ENCODE measurements at regions of chr11 and their contacts with region 1.

Region 1: DNA sequence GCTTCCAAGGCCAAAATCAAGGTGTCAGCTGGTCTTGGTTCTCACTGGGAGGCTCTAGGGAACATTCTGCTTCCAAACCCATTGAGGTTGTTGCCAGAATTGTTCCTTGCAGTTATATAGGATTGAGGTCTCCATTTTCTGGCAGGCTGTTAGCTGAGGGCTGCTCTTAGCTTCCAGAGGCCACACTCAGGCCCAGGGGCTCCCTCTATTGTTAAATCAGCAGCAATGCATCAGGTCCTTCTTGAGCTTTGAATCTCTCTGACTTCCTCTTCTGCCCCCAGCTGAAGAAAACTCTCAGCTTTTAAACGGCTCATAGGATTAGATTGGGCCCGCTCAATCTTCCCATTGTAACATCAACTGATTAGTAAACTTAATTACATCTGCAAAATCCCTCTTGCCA is 39.3 kb upstream of the BSX start:
- DNase-seq: peak; percentile 54 to 77
- ATAC-seq: peak; percentile 84 to 91; a peak in 5 of 6 replicates
- H3K4me3 ChIP-seq: no peak overlapping the region
- H3K27ac ChIP-seq: no peak overlapping the region
- H3K4me1 ChIP-seq: no peaks in the 10 kb centered on the region
- CTCF ChIP-seq: peak; percentile 53
- EP300 ChIP-seq: no peak
- POLR2A ChIP-seq: no peak
- RAD21 ChIP-seq: peak; percentile 52 to 65

Region 2: DNA sequence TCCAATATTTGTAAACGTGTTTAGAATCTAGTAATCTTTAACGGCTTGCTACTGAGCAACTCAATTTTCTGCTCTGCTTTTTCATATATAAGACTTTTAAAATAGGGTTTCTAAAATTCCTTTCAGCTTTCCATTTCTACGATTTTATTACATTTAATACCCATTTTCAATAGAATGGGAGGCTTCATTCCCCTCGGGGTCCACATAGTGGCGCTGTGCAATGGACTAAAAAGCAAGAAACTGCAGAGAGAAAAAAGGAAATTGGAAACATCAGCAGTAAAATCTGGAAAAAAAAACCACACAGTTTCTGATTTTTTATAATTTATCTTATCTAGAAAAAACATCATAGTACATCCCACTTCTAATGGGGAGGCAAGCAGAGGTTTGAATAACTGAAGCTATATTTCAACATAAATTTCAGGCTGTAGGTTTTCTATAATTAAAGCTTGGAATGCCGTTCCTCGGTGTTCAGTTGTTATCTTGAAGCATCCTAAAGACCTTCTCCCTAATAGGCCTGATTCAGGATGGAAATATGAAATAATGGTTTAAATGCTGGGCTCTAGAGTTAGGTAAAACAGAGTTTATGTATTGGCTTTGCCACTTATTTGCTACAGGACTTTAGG is 157.2 kb before region 1 on chr11:
- CTCF ChIA-PET with region 1: interaction called, 177 read pairs
- POLR2A ChIA-PET with region 1: interaction called, 6 read pairs
- DNase-seq: peak; percentile 20 to 37
- ATAC-seq: peak in 1 of 2 experiments; percentile 46; a peak in 1 of 6 replicates
- H3K4me3 ChIP-seq: no peak overlapping the region
- H3K27ac ChIP-seq: no peak overlapping the region
- H3K4me1 ChIP-seq: no peaks in the 10 kb centered on the region
- CTCF ChIP-seq: peak; percentile 83
- EP300 ChIP-seq: no peak
- POLR2A ChIP-seq: no peak
- RAD21 ChIP-seq: peak; percentile 78 to 84

Region 3: DNA sequence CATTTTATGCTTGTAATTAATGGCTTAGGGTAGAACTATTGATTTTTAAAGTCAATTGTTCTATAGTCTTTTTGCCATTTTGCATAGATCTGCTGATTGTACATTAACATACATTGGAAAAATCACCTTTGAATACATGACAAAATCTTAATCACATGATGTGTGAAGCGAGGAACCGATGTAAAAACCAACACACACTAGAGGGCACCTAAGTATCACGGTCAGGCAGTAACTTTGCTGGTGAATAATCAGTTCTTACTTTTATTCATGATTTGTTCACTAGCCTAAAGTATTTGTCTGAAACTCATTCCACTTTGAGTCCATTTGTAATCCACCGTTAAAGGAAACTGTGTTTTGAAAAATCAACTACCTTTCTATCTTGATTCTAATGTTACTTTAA is 110.2 kb before region 1 on chr11:
- CTCF ChIA-PET with region 1: interaction called, 10 read pairs
- POLR2A ChIA-PET with region 1: no interaction called
- DNase-seq: peak in 1 of 2 experiments; percentile 29
- ATAC-seq: peak in 1 of 2 experiments; percentile 32; a peak in 1 of 6 replicates
- H3K4me3 ChIP-seq: no peak overlapping the region
- H3K27ac ChIP-seq: no peak overlapping the region
- H3K4me1 ChIP-seq: no peaks in the 10 kb centered on the region
- CTCF ChIP-seq: peak; percentile 36
- EP300 ChIP-seq: no peak
- POLR2A ChIP-seq: no peak
- RAD21 ChIP-seq: peak; percentile 40 to 59

Region 4: DNA sequence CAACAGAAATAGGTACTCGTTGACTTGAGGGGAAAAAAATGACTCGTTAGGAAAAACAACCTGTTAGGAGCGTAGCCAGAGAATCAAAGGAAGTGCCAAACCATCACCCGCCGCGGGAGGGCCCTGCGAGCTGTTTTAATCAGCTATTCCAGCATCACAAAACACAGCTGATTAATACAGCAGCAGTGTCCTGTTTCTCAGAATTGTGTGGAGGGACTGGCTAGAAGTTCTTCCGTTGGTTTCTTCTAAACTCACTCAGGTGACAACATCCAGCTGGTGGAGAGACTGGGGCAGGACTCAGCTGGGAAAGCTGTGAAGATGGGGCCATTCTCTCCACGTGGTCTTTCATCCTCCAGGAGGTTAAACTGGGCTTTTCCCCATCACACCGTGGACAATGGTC is 12.9 kb after region 1 on chr11:
- CTCF ChIA-PET with region 1: interaction called, 27 read pairs
- POLR2A ChIA-PET with region 1: no interaction called
- DNase-seq: peak in 1 of 2 experiments; percentile 27
- ATAC-seq: peak; percentile 71 to 73
- H3K4me3 ChIP-seq: no peak overlapping the region
- H3K27ac ChIP-seq: no peak overlapping the region
- H3K4me1 ChIP-seq: no peaks in the 10 kb centered on the region
- CTCF ChIP-seq: no peak
- EP300 ChIP-seq: no peak
- POLR2A ChIP-seq: no peak
- RAD21 ChIP-seq: peak; percentile 12 to 25; a peak in 1 of 5 replicates

Region 5: GRCh38 chr11:123046473-123047259 is 25.7 kb after region 1 on chr11:
- CTCF ChIA-PET with region 1: interaction called, 16 read pairs
- POLR2A ChIA-PET with region 1: no interaction called
- DNase-seq: no peak
- ATAC-seq: peak in 1 of 2 experiments; percentile 10; a peak in 1 of 6 replicates
- H3K4me3 ChIP-seq: no peak overlapping the region
- H3K27ac ChIP-seq: no peak overlapping the region
- H3K4me1 ChIP-seq: no peaks in the 10 kb centered on the region
- CTCF ChIP-seq: no peak
- EP300 ChIP-seq: no peak
- POLR2A ChIP-seq: no peak
- RAD21 ChIP-seq: no peak

Region 6: DNA sequence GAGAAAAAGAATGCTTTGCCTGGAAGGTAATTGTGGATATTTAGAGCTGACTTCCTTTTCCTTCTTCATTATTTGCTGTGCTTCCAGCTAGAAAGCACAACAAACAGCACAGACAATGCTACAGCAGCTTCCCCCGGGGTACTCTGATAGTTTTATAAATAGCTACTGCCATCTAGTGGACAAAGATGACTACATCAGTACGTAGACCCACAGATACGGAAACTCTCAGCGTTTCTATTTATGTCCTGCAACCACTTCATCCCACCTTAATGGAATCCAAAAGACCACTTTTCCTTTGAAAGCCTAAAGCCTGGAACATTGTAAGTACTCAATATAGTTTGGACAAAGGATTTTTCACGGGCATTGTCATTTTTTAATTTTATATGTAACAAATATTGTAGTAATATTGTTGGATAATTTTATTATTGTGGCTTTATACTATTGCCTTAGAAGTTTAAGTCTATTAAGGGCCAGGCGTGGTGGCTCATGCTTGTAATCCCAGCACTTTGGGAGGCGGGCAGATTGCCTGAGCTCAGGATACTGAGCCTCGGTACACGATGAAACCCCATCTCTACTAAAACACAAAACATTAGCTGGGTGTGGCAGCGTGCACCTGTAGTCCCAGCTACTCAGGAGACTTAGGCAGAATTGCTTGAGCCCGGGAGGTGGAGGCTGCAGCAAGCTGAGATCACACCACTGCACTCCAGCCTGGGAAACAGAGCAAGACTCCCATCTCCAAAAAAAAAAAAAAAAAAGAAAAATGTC is 33.5 kb after region 1 on chr11:
- CTCF ChIA-PET with region 1: interaction called, 15 read pairs
- POLR2A ChIA-PET with region 1: interaction called, 8 read pairs
- DNase-seq: peak; percentile 55 to 70
- ATAC-seq: peak; percentile 76 to 92
- H3K4me3 ChIP-seq: no peak overlapping the region
- H3K27ac ChIP-seq: no peak overlapping the region
- H3K4me1 ChIP-seq: peaks cover 44% of the 10 kb centered on the region
- CTCF ChIP-seq: peak; percentile 60
- EP300 ChIP-seq: no peak
- POLR2A ChIP-seq: no peak
- RAD21 ChIP-seq: peak; percentile 28 to 31; a peak in 1 of 5 replicates

Region 7: DNA sequence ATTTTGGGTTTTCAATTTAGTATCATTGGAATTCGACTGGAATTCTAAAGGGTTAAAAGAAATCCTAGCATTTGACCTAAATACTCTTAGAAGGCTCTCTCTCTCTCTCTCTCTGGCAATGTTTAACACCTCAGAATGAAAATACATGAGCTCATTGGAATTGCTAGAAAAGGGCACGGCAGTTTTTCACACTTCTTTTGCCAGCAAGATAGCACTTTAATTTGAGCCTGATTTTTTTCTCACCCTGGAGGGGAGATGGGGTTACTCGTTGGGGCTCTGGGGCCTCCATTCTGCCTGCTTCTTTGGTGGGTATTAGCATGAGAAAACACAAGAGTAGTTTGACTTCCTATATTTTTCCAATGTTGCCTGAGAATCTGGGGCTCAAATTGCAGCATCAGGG is 196.9 kb after region 1 on chr11:
- CTCF ChIA-PET with region 1: no interaction called
- POLR2A ChIA-PET with region 1: no interaction called
- DNase-seq: no peak
- ATAC-seq: peak in 1 of 2 experiments; percentile 31; a peak in 3 of 6 replicates
- H3K4me3 ChIP-seq: no peak overlapping the region
- H3K27ac ChIP-seq: peak overlapping the region; percentile 85 to 92
- H3K4me1 ChIP-seq: peaks cover 30% of the 10 kb centered on the region
- CTCF ChIP-seq: no peak
- EP300 ChIP-seq: no peak
- POLR2A ChIP-seq: no peak
- RAD21 ChIP-seq: no peak

Region 8: GRCh38 chr11:123228496-123229163 is 207.7 kb after region 1 on chr11:
- CTCF ChIA-PET with region 1: no interaction called
- POLR2A ChIA-PET with region 1: no interaction called
- DNase-seq: no peak
- ATAC-seq: no peak
- H3K4me3 ChIP-seq: no peak overlapping the region
- H3K27ac ChIP-seq: peak overlapping the region in 1 of 2 experiments; percentile 43; a peak in 1 of 6 replicates
- H3K4me1 ChIP-seq: peaks cover 22% of the 10 kb centered on the region
- CTCF ChIP-seq: no peak
- EP300 ChIP-seq: no peak
- POLR2A ChIP-seq: no peak
- RAD21 ChIP-seq: no peak